ENCODE measurements at regions of chr1 and their contacts with region 1.

Region 1: GRCh38 chr1:156920233-156921052 is at the start of gene LRRC71:
- DNase-seq: peak; percentile 77
- H3K4me3 ChIP-seq: no peak within 1 kb of the TSS
- H3K27ac ChIP-seq: no peak within 1 kb of the TSS
- H3K4me1 ChIP-seq: no peaks in the 10 kb centered on the region
- H3K27me3 ChIP-seq: peaks cover 26 to 32% of the 10 kb centered on the region in 2 experiments
- CTCF ChIP-seq: peak; percentile 97 to 98
- POLR2A ChIP-seq: peak; percentile 71
- total RNA-seq, gene LRRC71: 0.66 and 1.2 TPM in 2 replicates

Region 2: DNA sequence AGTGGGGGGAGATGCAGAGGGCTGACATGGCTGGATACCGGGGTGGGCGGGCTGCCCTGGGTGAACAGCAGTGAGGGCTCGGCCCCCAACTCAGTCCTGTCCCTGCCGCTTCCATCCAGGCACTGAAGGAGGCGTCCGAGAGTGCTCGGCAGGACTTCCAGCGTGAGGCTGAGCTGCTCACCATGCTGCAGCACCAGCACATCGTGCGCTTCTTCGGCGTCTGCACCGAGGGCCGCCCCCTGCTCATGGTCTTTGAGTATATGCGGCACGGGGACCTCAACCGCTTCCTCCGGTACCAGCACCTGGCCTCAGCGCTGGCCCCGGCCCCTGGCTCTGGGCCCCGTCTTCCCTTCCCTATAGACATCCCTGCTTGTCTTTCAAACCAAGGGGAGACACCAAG is 44.2 kb before region 1 on chr1:
- CTCF ChIA-PET with region 1: interaction called, 3 read pairs
- POLR2A ChIA-PET with region 1: no interaction called
- dilution Hi-C with region 1: no loop called
- intact Hi-C with region 1: loop called (anchors 1 kb)
- DNase-seq: no peak
- H3K4me3 ChIP-seq: no peak overlapping the region
- H3K27ac ChIP-seq: no peak overlapping the region
- H3K4me1 ChIP-seq: peaks cover 17% of the 10 kb centered on the region
- H3K27me3 ChIP-seq: peaks cover 6 to 15% of the 10 kb centered on the region in 2 experiments
- CTCF ChIP-seq: peak in 1 of 2 donors; percentile 24
- POLR2A ChIP-seq: no peak

Region 3: DNA sequence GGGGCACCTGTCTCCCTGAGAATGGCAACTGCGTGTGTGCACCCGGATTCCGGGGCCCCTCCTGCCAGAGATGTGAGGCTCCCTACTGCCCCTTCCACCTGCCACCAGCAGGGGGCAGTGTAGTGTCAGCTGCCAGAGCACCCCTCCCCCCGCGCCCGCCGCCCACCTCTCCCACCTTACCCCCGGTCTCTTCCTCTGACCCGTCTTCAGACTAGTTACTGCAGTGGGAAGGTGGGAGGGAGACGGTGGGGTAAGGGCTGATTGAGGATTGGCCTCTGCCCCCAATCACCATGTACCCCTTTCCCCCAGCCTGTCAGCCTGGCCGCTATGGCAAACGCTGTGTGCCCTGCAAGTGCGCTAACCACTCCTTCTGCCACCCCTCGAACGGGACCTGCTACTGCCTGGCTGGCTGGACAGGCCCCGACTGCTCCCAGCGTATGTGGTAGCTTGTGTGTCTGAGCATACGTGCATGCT is 10.1 kb before region 1 on chr1:
- CTCF ChIA-PET with region 1: interaction called, 10 read pairs
- POLR2A ChIA-PET with region 1: no interaction called
- dilution Hi-C with region 1: no loop called
- intact Hi-C with region 1: no loop called
- DNase-seq: no peak
- H3K4me3 ChIP-seq: no peak overlapping the region
- H3K27ac ChIP-seq: no peak overlapping the region
- H3K4me1 ChIP-seq: peaks cover 24% of the 10 kb centered on the region
- H3K27me3 ChIP-seq: no peaks in the 10 kb centered on the region
- CTCF ChIP-seq: peak; percentile 55 to 83
- POLR2A ChIP-seq: no peak

Region 4: DNA sequence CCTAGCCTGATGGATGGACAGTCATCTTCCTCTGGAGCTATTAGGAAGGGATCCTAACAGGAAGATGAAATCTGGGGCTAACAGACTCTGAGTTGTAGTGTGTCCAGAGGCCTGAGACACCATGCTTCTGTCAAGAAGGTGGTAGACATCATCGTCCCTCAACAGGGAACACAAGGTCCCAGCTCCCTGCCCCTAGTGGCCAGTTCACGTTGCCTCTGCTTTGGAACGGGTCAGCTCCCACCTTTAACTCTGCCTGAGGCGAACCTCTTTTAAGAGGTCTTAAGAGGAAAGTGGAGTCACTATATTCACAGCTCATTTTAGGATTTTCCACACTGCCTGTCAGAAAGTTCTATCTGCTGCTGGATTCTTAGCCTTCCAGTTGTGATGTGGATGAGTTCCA is 28.3 kb after region 1 on chr1:
- CTCF ChIA-PET with region 1: no interaction called
- POLR2A ChIA-PET with region 1: no interaction called
- dilution Hi-C with region 1: no loop called
- intact Hi-C with region 1: no loop called
- DNase-seq: no peak
- H3K4me3 ChIP-seq: no peak overlapping the region
- H3K27ac ChIP-seq: no peak overlapping the region
- H3K4me1 ChIP-seq: no peaks in the 10 kb centered on the region
- H3K27me3 ChIP-seq: no peaks in the 10 kb centered on the region
- CTCF ChIP-seq: peak; percentile 20 to 24
- POLR2A ChIP-seq: no peak

Region 5: DNA sequence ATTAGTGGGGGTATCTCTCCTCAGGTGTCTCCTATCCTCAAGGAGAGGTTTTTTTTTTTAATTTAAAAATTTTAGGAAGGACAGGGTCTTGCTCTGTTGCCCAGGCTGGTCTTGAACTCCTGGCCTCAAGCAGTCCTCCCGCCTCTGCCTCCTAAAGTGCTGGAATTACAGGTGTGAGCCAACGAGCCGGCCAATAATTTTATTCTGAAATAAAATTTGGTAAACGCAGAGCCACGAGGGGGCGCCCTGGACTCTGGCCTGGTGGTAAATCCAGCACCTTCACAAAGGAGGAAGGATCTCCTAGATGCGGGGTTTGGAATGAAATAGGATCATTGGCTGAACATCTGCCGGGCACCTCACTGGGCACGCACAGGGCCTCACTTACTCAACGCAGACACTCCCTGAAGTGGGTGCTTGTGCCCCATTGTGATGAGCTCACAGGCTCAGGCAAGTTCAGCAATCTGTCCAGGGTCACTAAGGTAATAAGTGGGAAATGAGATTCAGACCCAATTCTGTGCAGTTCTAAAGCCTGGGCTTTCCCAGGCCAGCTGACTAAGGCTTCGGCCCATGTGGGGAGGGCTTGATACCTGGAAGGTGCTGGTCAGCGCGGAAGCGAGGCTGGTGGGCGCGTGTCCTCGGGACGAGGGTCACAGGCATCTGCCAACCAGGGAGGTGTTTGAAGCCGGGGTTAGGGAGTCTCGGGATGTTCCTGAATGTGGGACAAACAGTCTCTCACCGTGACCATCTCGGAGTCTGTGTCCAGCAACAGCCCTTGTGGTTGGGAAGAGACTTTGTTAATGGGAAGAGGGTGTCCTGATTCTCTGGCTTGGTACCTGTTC is 250.5 kb after region 1 on chr1:
- CTCF ChIA-PET with region 1: no interaction called
- POLR2A ChIA-PET with region 1: no interaction called
- dilution Hi-C with region 1: no loop called
- intact Hi-C with region 1: no loop called
- DNase-seq: peak; percentile 32
- H3K4me3 ChIP-seq: no peak overlapping the region
- H3K27ac ChIP-seq: no peak overlapping the region
- H3K4me1 ChIP-seq: no peaks in the 10 kb centered on the region
- H3K27me3 ChIP-seq: peaks cover 10 to 14% of the 10 kb centered on the region in 2 experiments
- CTCF ChIP-seq: peak; percentile 52 to 62
- POLR2A ChIP-seq: no peak